ENCODE measurements at regions of chr7 and their contacts with region 1.

Region 1: GRCh38 chr7:68006619-68007018 is 1010.0 kb downstream of the TYW1 start:
- DNase-seq: no peak
- H3K4me3 ChIP-seq: no peak overlapping the region
- H3K27ac ChIP-seq: no peak overlapping the region
- H3K4me1 ChIP-seq: no peaks in the 10 kb centered on the region
- H3K27me3 ChIP-seq: 0 out of 2 replicates have a peak, but pooled peaks cover 7% of the 10 kb centered on the region
- CTCF ChIP-seq: no peak

Region 2: GRCh38 chr7:68058014-68058413 is 51.4 kb after region 1 on chr7:
- CTCF ChIA-PET with region 1: no interaction called
- POLR2A ChIA-PET with region 1: interaction called, 14 read pairs
- intact Hi-C with region 1: no loop called
- DNase-seq: no peak
- H3K4me3 ChIP-seq: no peak overlapping the region
- H3K27ac ChIP-seq: no peak overlapping the region
- H3K4me1 ChIP-seq: no peaks in the 10 kb centered on the region
- H3K27me3 ChIP-seq: no peaks in the 10 kb centered on the region
- CTCF ChIP-seq: no peak

Measured in PC-9 (cell line).